ENCODE measurements at regions of chr3 and their contacts with region 1.

Region 1: GRCh38 chr3:58491506-58492402 is at the start of gene KCTD6:
- DNase-seq: peak; percentile 36
- H3K4me3 ChIP-seq: peak within 1 kb of the TSS; percentile 72
- CTCF ChIP-seq: peak; percentile 77

Region 2: GRCh38 chr3:58296269-58296668 is 195.5 kb before region 1 on chr3:
- CTCF ChIA-PET with region 1: no interaction called
- POLR2A ChIA-PET with region 1: no interaction called
- DNase-seq: no peak
- H3K4me3 ChIP-seq: no peak overlapping the region
- CTCF ChIP-seq: no peak

Region 3: GRCh38 chr3:58471025-58471887 is 20.5 kb before region 1 on chr3:
- CTCF ChIA-PET with region 1: interaction called, 37 read pairs
- POLR2A ChIA-PET with region 1: no interaction called
- DNase-seq: peak; percentile 56
- H3K4me3 ChIP-seq: no peak overlapping the region
- CTCF ChIP-seq: no peak

Region 4: DNA sequence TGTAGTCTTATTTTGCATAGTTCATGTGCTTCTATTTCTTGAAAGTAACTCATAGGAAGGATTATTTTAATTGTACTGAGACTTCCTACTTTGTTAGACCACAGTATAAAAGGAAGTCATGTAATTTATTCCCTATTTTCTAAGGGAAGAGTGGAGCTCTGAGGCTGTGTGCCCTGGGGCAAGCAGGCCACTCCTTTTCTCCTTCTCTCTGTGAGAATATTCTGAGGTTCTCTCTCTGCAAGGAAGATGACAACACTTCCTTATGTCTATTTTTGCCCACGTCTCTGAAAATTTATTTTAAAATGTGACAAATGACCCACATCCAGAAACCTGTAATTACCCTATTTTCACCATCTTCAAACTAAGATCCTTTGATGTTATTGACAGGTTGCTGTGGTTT is 11.1 kb after region 1 on chr3:
- CTCF ChIA-PET with region 1: interaction called, 26 read pairs
- POLR2A ChIA-PET with region 1: no interaction called
- DNase-seq: no peak
- H3K4me3 ChIP-seq: no peak overlapping the region
- CTCF ChIP-seq: no peak

Region 5: GRCh38 chr3:58532794-58533220 is 41.1 kb after region 1 on chr3:
- CTCF ChIA-PET with region 1: interaction called, 10 read pairs
- POLR2A ChIA-PET with region 1: no interaction called
- DNase-seq: no peak
- H3K4me3 ChIP-seq: no peak overlapping the region
- CTCF ChIP-seq: peak; percentile 93

Region 6: DNA sequence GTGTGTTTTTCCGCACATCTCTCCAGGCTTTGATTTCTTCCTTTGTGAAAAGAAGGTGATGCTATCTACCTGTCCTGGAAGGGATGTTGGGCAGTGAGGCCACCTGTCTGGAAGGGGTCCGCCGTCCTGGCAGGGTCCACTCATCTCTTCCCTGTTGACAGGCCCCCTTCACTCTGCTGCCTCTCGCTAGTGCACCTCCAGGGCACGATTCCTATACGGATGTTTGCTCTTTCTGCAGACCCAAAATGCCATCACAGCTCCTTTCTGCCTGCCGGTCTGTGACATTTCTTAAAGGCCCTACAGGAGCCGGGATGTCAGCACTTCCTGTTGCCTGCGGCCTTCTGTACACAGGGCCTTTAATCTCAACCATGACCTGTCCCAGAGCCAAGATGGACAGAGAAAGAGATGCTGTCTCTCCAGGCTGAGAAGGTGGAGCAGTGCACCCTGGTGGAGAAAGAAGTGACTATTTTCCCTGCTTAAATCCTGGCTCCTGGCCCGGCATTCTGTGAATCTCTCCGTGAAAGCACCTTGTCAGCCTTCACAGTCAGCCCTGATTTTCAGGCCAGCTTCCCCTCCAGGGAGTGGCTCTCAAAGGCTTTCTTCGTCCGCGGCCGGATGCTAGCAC is 167.4 kb after region 1 on chr3:
- CTCF ChIA-PET with region 1: no interaction called
- POLR2A ChIA-PET with region 1: no interaction called
- DNase-seq: no peak
- H3K4me3 ChIP-seq: no peak overlapping the region
- CTCF ChIP-seq: peak; percentile 41

Region 7: GRCh38 chr3:58835086-58835485 is 343.3 kb after region 1 on chr3:
- CTCF ChIA-PET with region 1: no interaction called
- POLR2A ChIA-PET with region 1: no interaction called
- DNase-seq: peak; percentile 40
- H3K4me3 ChIP-seq: no peak overlapping the region
- CTCF ChIP-seq: no peak